Activated CD4-positive, alpha-beta memory T cell treated with anti-CD3 and anti-CD28 coated beads for 36 hours (primary cell): ENCODE measurements at regions of chr18 and their contacts with region 1.

Region 1: GRCh38 chr18:13435596-13436327 is 217.2 kb downstream of the LDLRAD4 start:
- DNase-seq: peak; percentile 22
- H3K4me3 Mint-ChIP-seq: no peak overlapping the region
- H3K27ac Mint-ChIP-seq: no peak overlapping the region
- H3K4me1 Mint-ChIP-seq: peaks cover 58% of the 10 kb centered on the region
- H3K27me3 Mint-ChIP-seq: no peaks in the 10 kb centered on the region

Region 2: DNA sequence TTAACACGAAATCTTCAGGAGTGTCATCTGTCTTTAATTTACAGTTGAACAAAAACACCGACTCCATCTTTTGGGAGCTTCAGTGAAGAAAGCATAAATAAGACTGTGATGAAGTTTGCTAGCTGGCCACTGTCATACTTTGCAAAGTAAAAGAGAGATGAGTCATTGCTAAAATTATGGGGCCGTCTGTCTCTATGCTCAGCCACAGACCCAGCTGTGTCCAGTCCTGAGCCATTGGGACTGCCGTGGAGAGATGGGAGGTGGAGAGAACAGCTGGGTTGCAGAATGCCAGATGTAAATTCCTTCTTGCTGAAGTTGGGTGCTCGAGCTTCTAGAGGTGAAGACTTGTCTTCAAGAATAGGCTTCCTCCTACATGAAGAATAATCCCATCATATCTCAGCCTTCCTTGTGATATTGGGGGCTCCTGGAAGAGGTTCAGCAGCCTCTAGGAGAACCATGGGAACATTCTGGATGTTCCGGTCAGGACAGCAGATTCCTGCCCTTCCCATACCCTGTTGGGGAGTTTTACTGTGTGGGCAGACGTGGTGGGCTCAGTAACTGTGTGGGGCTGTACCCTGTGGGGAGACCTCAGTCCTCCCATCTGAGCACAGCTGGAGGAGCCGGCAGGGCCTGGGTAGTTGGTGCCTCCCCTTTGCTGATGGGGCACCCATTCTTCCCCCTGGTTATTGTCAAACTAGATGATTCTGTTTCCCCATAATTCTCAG is 146.1 kb before region 1 on chr18:
- CTCF ChIA-PET with region 1: no interaction called
- POLR2A ChIA-PET with region 1: no interaction called
- intact Hi-C with region 1: loop called (anchors 2 kb)
- DNase-seq: no peak
- H3K4me3 Mint-ChIP-seq: no peak overlapping the region
- H3K27ac Mint-ChIP-seq: peak overlapping the region; percentile 82
- H3K4me1 Mint-ChIP-seq: peaks cover 47% of the 10 kb centered on the region
- H3K27me3 Mint-ChIP-seq: peaks cover 8% of the 10 kb centered on the region

Region 3: DNA sequence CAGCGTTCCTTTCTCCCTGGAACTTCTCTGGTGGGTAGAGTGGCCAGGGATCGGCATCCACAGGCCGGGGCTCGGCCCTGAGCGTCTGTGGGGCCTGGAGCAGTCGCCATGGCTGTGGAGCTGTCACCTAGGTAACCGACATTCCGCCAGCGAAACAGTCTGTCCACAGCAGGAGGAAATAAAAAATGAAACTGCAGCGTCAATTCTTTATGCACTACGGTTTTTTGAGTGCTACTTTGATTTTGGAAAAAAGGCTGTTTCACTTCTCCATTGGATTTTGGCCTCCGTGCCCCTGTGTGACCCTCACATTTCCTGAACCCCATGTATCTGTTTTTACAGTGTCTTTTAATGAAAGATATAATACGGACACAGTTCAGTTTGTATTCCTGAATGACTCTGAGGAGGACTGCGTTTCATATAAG is 53.8 kb before region 1 on chr18:
- CTCF ChIA-PET with region 1: interaction called, 4 read pairs
- POLR2A ChIA-PET with region 1: interaction called, 10 read pairs
- intact Hi-C with region 1: loop called (anchors 1 kb)
- DNase-seq: peak; percentile 58
- H3K4me3 Mint-ChIP-seq: peak overlapping the region; percentile 73
- H3K27ac Mint-ChIP-seq: peak overlapping the region; percentile 97
- H3K4me1 Mint-ChIP-seq: peaks cover 74% of the 10 kb centered on the region
- H3K27me3 Mint-ChIP-seq: no peaks in the 10 kb centered on the region

Region 4: DNA sequence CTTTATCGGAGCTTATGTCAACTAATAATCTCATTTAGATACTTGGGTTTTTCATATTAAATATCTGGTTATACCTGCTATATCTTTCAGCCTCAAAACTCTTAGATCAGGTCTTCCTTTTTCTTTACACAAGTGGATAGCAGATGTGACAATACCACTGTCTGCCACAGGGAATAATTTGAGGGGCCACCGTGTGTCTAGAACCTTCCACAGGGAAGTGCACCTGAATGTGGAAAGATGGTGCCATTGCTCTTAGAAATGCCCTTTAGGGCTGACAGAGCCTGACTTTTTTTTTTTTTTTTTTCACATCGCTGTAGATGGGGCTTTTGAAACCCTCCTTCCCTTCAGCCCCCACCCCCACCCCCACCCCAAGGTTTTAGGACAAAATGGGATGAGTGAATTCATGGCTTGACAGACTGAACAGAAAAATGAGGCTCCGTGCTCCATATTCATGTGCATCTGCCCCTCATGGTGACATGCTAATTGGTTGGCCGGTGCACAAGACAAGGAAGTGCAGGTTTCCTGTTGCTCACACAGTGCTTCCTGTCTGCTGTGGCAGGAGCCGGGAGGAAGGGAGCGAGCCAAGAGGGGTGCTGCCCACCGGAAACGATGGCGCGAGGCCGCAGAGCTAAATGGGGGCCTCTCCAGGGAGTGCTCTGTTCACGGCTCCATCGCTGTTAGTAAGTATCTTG is 28.8 kb after region 1 on chr18:
- CTCF ChIA-PET with region 1: no interaction called
- POLR2A ChIA-PET with region 1: interaction called, 3 read pairs
- intact Hi-C with region 1: loop called (anchors 2 kb)
- DNase-seq: peak; percentile 83
- H3K4me3 Mint-ChIP-seq: peak overlapping the region; percentile 86
- H3K27ac Mint-ChIP-seq: peak overlapping the region; percentile 95
- H3K4me1 Mint-ChIP-seq: peaks cover 56% of the 10 kb centered on the region
- H3K27me3 Mint-ChIP-seq: no peaks in the 10 kb centered on the region

Region 5: DNA sequence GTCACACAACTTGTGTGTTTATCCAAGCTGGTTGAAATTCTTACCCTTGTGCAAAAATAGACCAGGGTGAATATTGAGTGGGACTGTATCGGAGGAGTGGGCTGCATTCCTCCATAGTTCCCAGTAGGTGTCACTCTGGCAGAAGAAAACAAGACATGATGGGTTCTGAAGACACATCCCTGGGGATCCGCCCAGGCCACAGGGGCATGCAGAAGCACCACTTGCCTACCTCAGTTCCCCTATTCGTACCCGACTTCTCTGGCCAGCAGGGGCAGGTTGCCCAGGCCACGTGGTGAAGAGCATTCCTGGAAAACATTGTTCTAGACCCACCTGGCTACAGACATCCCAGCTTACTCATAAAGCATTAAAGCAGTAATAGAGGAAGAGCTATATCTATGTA is 122.4 kb after region 1 on chr18:
- CTCF ChIA-PET with region 1: no interaction called
- POLR2A ChIA-PET with region 1: no interaction called
- intact Hi-C with region 1: loop called (anchors 5 kb)
- DNase-seq: peak; percentile 43
- H3K4me3 Mint-ChIP-seq: no peak overlapping the region
- H3K27ac Mint-ChIP-seq: no peak overlapping the region
- H3K4me1 Mint-ChIP-seq: peaks cover 38% of the 10 kb centered on the region
- H3K27me3 Mint-ChIP-seq: no peaks in the 10 kb centered on the region